ENCODE measurements at regions of chr12 and their contacts with region 1.

Region 1: DNA sequence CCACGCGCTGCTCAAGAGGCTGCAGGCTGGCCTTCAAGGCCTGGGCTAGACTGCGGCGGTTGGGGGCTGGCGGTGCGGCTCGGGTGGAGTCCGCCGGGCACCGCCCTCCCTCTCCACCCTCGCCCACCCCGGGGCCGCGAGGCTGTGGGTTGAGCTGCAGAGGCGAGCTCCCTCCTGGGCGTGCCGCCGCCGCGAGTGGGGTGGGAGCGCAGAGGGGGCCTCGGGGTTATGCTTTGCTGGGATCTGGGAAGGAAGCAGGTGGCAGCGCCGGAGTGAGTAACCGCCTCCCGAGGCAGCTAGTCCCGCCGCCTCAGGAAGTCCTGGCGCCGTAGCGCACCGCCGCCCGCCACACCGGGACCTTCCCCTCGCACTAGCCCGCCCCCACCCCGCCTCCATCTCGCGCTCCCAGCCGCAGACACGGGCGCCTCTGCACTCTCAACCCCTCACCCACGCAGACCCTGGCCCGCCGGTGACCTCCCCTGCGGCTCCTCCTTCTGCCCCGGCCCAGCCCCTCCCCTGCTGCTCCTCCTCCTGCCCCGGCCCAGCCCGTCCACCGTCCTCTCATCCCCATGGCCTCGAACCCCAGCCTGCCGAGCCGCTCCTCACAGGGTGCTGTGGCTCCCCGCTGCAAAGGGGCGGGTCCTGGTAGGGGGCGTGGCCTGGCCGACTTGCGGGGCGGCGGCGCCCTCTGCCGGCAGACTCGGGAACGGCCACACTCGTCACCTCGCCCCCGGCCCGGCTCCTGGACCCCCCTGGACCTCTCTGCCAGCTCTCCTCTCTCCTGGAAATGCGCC is 16.6 kb downstream of the TAMALIN start:
- DNase-seq: no peak
- H3K4me3 ChIP-seq: peak overlapping the region; percentile 59
- CTCF ChIP-seq: peak; percentile 98

Region 2: GRCh38 chr12:51281202-51281924 is 742.0 kb before region 1 on chr12:
- CTCF ChIA-PET with region 1: no interaction called
- POLR2A ChIA-PET with region 1: no interaction called
- DNase-seq: peak; percentile 45
- H3K4me3 ChIP-seq: no peak overlapping the region
- CTCF ChIP-seq: no peak

Region 3: DNA sequence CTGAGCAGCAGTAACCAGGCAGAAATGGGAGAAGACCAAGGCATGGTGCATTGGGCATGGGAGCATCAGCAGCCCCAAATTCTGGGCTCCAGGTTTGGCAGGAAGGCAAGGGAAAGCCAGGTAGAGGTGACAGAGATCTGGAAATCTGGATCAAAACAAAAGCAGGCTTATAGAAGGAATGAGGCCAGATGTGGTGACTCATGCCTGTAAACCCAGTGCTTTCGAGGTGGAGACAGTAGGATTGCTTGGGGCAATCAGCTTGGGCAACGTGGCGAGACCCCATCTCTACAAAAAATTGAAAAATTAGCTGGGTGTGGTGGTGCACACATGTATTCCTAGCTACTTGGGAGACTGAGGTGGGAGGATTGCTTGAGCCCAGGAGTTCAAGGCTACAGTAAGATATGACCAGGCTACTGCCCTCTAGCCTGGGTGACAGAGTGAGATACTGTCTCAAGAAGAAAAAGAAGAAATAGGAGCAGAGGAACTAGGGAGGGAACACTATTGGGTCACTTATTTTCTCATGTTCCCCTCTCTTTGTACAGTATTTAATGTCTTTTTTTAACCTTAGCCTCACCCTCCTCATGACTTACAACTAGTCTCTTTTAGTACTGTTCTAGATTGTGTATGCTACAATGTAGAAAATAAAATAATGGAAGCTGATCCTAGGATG is 573.7 kb before region 1 on chr12:
- CTCF ChIA-PET with region 1: no interaction called
- POLR2A ChIA-PET with region 1: no interaction called
- DNase-seq: no peak
- H3K4me3 ChIP-seq: no peak overlapping the region
- CTCF ChIP-seq: no peak

Region 4: GRCh38 chr12:51721282-51721940 is 302.0 kb before region 1 on chr12:
- CTCF ChIA-PET with region 1: no interaction called
- POLR2A ChIA-PET with region 1: no interaction called
- DNase-seq: no peak
- H3K4me3 ChIP-seq: no peak overlapping the region
- CTCF ChIP-seq: no peak

Region 5: GRCh38 chr12:51784688-51785087 is 238.7 kb before region 1 on chr12:
- CTCF ChIA-PET with region 1: no interaction called
- POLR2A ChIA-PET with region 1: no interaction called
- DNase-seq: no peak
- H3K4me3 ChIP-seq: no peak overlapping the region
- CTCF ChIP-seq: no peak

Region 6: GRCh38 chr12:51886021-51886322 is 137.4 kb before region 1 on chr12:
- CTCF ChIA-PET with region 1: interaction called, 186 read pairs
- POLR2A ChIA-PET with region 1: interaction called, 3 read pairs
- DNase-seq: peak; percentile 88
- H3K4me3 ChIP-seq: no peak overlapping the region
- CTCF ChIP-seq: no peak

Region 7: GRCh38 chr12:51970904-51971646 is 52.3 kb before region 1 on chr12:
- CTCF ChIA-PET with region 1: interaction called, 13 read pairs
- POLR2A ChIA-PET with region 1: no interaction called
- DNase-seq: no peak
- H3K4me3 ChIP-seq: no peak overlapping the region
- CTCF ChIP-seq: peak; percentile 61

Region 8: DNA sequence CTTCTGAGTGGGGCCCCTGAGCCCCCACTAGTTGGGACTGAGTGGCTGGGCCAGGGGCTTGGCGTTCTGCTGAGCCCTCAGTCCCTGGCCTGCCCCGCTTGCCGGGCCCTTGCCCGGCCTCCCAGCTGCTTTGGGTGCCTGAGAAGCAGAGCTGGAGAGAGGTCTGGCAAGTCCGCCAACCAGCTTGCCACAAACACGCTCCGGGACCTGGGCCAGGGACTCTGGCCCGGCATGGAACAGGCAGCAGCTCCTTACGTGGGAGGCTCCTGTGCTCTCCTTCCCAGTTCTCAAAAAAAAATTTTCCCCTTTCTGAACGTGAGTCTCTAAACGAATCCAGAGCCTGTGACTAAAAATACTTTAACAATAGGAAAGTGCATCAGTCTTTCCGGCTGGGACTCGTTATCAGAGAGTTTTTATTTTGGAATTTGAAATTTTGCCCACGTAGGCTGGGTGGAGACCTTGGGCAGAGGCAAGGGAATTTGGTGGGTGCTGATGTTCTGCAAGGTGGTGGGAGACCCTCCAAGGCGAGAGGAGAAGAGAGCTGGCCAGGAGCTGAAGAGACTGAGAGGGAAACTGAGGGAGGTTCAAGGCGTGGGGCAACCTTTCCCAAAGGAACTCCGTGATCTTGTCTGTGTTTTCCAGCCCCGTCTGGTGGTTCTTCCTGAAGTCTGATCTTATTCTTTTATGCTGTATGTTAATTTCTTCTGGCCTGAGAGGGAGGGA is 21.0 kb after region 1 on chr12:
- CTCF ChIA-PET with region 1: interaction called, 98 read pairs
- POLR2A ChIA-PET with region 1: no interaction called
- DNase-seq: no peak
- H3K4me3 ChIP-seq: no peak overlapping the region
- CTCF ChIP-seq: no peak

Region 9: DNA sequence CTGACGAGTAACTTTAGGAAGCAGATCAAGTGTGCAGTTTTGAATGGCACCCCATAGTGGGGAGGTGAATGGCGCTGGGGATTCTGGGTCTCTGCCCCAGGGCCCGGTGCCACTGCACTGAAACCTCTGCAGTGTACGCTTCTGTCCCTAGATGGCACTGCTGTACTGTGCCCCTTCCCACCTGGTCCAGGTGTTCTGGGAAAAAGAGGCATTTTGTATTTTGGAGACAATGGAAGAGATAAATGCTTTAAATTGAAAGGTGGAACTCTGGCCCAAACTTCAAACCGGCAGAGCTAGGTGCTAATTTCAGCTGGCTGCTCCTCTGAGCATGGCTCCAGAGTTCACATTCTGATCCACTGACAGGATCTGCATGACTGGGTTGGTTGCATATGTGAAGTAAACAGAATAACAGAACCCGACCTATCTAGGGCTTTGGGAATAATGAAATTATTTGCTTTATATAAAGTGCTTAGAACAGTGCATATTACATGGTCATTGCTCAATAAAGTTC is 116.2 kb after region 1 on chr12:
- CTCF ChIA-PET with region 1: interaction called, 51 read pairs
- POLR2A ChIA-PET with region 1: no interaction called
- DNase-seq: no peak
- H3K4me3 ChIP-seq: no peak overlapping the region
- CTCF ChIP-seq: peak; percentile 58

Region 10: GRCh38 chr12:52147367-52147972 is 124.1 kb after region 1 on chr12:
- CTCF ChIA-PET with region 1: interaction called, 51 read pairs
- POLR2A ChIA-PET with region 1: no interaction called
- DNase-seq: peak; percentile 92
- H3K4me3 ChIP-seq: no peak overlapping the region
- CTCF ChIP-seq: no peak

Measured in AG04449 (cell line).